ENCODE measurements at regions of chr17 and their contacts with region 1.

Region 1: GRCh38 chr17:71438631-71439146 is 682.1 kb upstream of the SOX9 start:
- DNase-seq: peak; percentile 33 to 91
- H3K4me3 ChIP-seq: no peak overlapping the region
- H3K27ac ChIP-seq: peak overlapping the region; percentile 69
- H3K4me1 ChIP-seq: peaks cover 19% of the 10 kb centered on the region
- H3K27me3 ChIP-seq: no peaks in the 10 kb centered on the region
- CTCF ChIP-seq: no peak

Region 2: GRCh38 chr17:71099003-71099714 is 339.5 kb before region 1 on chr17:
- CTCF ChIA-PET with region 1: no interaction called
- POLR2A ChIA-PET with region 1: no interaction called
- intact Hi-C with region 1: no loop called
- DNase-seq: no peak
- H3K4me3 ChIP-seq: no peak overlapping the region
- H3K27ac ChIP-seq: no peak overlapping the region
- H3K4me1 ChIP-seq: no peaks in the 10 kb centered on the region
- H3K27me3 ChIP-seq: no peaks in the 10 kb centered on the region
- CTCF ChIP-seq: no peak

Region 3: GRCh38 chr17:71188811-71189492 is 249.7 kb before region 1 on chr17:
- CTCF ChIA-PET with region 1: no interaction called
- POLR2A ChIA-PET with region 1: no interaction called
- intact Hi-C with region 1: loop called (anchors 2 kb)
- DNase-seq: peak; percentile 20 to 91
- H3K4me3 ChIP-seq: peak overlapping the region; percentile 24; the same call in 1 of the 2 replicates
- H3K27ac ChIP-seq: peak overlapping the region; percentile 95
- H3K4me1 ChIP-seq: peaks cover 25% of the 10 kb centered on the region
- H3K27me3 ChIP-seq: no peaks in the 10 kb centered on the region
- CTCF ChIP-seq: no peak

Region 4: GRCh38 chr17:71460943-71461342 is 22.3 kb after region 1 on chr17:
- CTCF ChIA-PET with region 1: interaction called, 4 read pairs
- POLR2A ChIA-PET with region 1: interaction called, 10 read pairs
- intact Hi-C with region 1: no loop called
- DNase-seq: no peak
- H3K4me3 ChIP-seq: no peak overlapping the region
- H3K27ac ChIP-seq: no peak overlapping the region
- H3K4me1 ChIP-seq: no peaks in the 10 kb centered on the region
- H3K27me3 ChIP-seq: no peaks in the 10 kb centered on the region
- CTCF ChIP-seq: peak; percentile 46

Region 5: GRCh38 chr17:71472809-71473789 is 34.4 kb after region 1 on chr17:
- CTCF ChIA-PET with region 1: no interaction called
- POLR2A ChIA-PET with region 1: no interaction called
- intact Hi-C with region 1: no loop called
- DNase-seq: peak; percentile 18 to 45
- H3K4me3 ChIP-seq: no peak overlapping the region
- H3K27ac ChIP-seq: no peak overlapping the region
- H3K4me1 ChIP-seq: no peaks in the 10 kb centered on the region
- H3K27me3 ChIP-seq: no peaks in the 10 kb centered on the region
- CTCF ChIP-seq: peak; percentile 76

Measured in PC-9 (cell line).